Dendritic cell treated with granulocyte-macrophage colony-stimulating factor and Interleukin-4, amounts not matched to agents 40 ng/mL and 50 ng/mL, for 4 days (primary cell): ENCODE measurements at regions of chr14 and their contacts with region 1.

Region 1: DNA sequence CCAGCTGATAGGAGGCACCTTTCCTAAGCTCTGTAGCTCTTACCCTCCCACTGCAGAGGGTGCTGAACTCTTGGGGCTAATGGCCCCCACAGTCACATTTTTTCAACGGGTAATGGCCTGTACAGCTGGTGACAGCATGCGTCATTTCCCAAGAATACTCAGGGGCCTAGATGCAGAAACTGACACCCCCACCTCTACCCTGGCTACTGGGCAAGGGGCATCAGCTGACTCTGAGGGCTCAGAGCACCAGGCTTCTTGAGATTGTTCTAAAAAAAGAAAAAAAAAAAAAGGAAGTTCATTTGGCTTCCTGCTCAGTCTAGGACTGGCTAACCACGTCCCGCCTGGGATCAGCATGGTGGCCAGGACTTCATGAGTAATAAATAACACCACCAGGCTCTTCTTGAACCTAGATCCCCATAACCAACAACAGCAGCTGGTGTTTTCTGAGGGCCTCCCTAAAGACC is 35.2 kb downstream of the ZFP36L1 start:
- H3K4me3 Mint-ChIP-seq: no peak overlapping the region
- H3K27ac Mint-ChIP-seq: peak overlapping the region; percentile 85
- H3K4me1 Mint-ChIP-seq: peaks cover 63% of the 10 kb centered on the region
- H3K27me3 Mint-ChIP-seq: peaks cover 44% of the 10 kb centered on the region

Region 2: GRCh38 chr14:68718023-68718995 is 39.3 kb before region 1 on chr14:
- intact Hi-C with region 1: loop called (anchors 5 kb)
- H3K4me3 Mint-ChIP-seq: no peak overlapping the region
- H3K27ac Mint-ChIP-seq: no peak overlapping the region
- H3K4me1 Mint-ChIP-seq: peaks cover 44% of the 10 kb centered on the region
- H3K27me3 Mint-ChIP-seq: peaks cover 12% of the 10 kb centered on the region

Region 3: DNA sequence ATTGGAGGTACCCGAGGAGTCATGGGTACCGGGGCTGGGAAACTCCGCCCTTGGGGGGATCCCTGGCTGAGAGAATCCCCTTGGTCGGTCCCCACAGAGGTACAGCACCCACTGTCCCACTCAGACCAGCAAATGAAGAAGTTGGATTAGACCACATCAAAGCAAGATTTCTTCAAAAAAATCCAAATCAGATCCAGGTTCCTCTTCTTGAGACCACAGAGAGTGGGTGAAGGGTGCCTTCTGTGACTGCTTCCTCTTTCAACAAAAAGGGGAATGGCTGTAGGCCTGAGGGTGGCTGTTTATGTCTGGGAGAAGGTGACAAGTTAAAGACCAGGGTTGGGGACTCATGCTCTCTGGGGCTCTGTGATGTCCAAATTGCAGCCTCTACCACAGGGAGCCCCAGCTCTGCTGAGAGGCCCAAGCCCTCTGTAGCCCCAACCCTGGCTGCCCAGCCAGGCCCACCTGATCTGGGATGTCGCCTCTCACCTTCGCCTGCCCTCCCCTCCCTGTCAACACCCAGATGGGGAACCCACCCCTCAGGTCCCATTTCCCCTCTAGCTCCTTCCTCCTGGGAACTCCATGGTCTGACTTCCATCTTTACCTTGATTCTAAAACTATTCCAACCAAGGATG is 15.7 kb before region 1 on chr14:
- intact Hi-C with region 1: loop called (anchors 2 kb)
- H3K4me3 Mint-ChIP-seq: no peak overlapping the region
- H3K27ac Mint-ChIP-seq: peak overlapping the region; percentile 91
- H3K4me1 Mint-ChIP-seq: peaks cover 71% of the 10 kb centered on the region
- H3K27me3 Mint-ChIP-seq: peaks cover 44% of the 10 kb centered on the region